CD8-positive, alpha-beta T cell (primary cell): ENCODE measurements at regions of chr14 and their contacts with region 1.

Region 1: DNA sequence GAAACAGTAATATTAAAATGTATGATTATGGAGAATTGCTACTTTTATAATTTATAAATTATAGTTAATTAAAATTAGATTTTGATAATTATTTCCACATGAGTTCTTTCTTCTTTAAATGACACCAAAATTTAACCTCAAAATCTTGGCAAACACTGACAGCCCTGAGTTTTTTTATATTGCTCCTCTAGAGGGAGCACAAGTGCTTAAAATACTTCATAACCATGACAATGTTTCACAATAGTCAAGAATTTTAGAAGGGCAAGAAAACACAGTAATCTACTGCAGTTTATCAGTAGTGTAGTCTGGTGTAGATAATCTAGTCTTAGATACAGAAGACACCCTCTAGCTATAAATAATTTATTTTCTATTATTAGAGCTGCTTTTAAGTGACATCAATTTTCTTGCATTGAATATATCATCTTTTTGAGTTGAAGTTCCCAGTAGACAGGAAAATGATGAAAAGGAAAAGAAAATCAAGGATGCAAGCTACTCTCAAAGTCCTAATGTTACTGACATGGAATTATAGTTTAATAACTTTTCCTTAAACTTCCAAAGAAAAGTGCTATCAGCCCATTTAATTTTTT is 14.3 kb upstream of the PTGER2 start:
- DNase-seq: peak in 2 of 9 experiments; percentile 60 to 74
- ATAC-seq: peak; percentile 49
- H3K4me3 ChIP-seq: no peak overlapping the region
- H3K4me3 Mint-ChIP-seq: no peak overlapping the region
- H3K27ac ChIP-seq: no peak overlapping the region
- H3K27ac Mint-ChIP-seq: no peak overlapping the region
- H3K4me1 ChIP-seq: no peaks in the 10 kb centered on the region
- H3K4me1 Mint-ChIP-seq: peaks cover 30% of the 10 kb centered on the region
- H3K27me3 ChIP-seq: no peaks in the 10 kb centered on the region
- H3K27me3 Mint-ChIP-seq: no peaks in the 10 kb centered on the region
- CTCF ChIP-seq: peak; percentile 96

Region 2: DNA sequence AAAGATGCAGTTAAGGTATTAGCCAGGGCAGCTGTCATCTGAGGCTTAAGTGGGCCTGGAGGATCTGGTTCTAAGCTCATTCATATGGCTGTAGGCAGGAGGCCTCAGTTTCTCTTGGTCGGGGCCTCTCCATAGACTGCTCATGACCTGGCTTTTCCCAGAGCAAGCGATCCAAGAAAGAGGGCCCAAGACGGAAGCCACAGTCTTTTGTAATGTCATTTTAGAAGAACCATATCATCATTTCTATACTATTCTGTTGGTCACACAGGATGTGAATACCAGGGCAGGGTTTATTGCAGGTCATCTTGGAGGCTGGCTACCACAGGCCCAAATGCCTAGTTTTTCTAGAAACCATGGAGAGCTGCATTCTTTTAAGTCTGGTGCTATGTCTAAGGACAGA is 391.7 kb before region 1 on chr14:
- CTCF ChIA-PET with region 1: no interaction called
- POLR2A ChIA-PET with region 1: no interaction called
- intact Hi-C with region 1: no loop called
- DNase-seq: no peak
- ATAC-seq: no peak
- H3K4me3 ChIP-seq: no peak overlapping the region
- H3K4me3 Mint-ChIP-seq: no peak overlapping the region
- H3K27ac ChIP-seq: peak overlapping the region in 1 of 2 experiments; percentile 47
- H3K27ac Mint-ChIP-seq: no peak overlapping the region
- H3K4me1 ChIP-seq: peaks cover 28% of the 10 kb centered on the region
- H3K4me1 Mint-ChIP-seq: peaks cover 68% of the 10 kb centered on the region
- H3K27me3 ChIP-seq: no peaks in the 10 kb centered on the region
- H3K27me3 Mint-ChIP-seq: no peaks in the 10 kb centered on the region
- CTCF ChIP-seq: no peak

Region 3: DNA sequence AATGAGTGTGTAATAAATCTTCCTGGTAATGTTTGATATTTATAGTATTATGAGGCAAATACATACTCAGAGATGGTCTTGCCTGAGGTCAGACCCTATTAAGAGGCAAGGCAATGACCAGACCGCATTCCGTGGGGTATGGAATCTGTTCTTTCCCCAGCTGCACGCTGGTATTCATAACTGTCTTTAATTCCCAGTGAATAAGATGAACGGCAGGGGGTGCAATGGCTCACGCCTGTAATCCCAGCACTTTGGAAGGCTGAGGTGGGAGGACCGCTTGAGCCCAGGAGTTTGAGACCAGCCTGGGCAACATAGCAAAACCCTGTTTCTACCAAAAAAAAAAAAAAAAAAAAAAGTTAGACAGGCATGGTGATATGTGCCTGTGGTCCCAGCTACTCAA is 351.0 kb after region 1 on chr14:
- CTCF ChIA-PET with region 1: no interaction called
- POLR2A ChIA-PET with region 1: interaction called, 3 read pairs
- intact Hi-C with region 1: loop called in 1 of 2 experiments (anchors 10 kb)
- DNase-seq: no peak
- ATAC-seq: no peak
- H3K4me3 ChIP-seq: no peak overlapping the region
- H3K4me3 Mint-ChIP-seq: no peak overlapping the region
- H3K27ac ChIP-seq: no peak overlapping the region
- H3K27ac Mint-ChIP-seq: no peak overlapping the region
- H3K4me1 ChIP-seq: no peaks in the 10 kb centered on the region
- H3K4me1 Mint-ChIP-seq: no peaks in the 10 kb centered on the region
- H3K27me3 ChIP-seq: no peaks in the 10 kb centered on the region
- H3K27me3 Mint-ChIP-seq: no peaks in the 10 kb centered on the region
- CTCF ChIP-seq: no peak

Region 4: GRCh38 chr14:52776816-52777215 is 477.0 kb after region 1 on chr14:
- CTCF ChIA-PET with region 1: interaction called, 3 read pairs
- POLR2A ChIA-PET with region 1: no interaction called
- intact Hi-C with region 1: loop called in 1 of 2 experiments (anchors 5 kb)
- DNase-seq: peak in 1 of 9 experiments; percentile 24
- ATAC-seq: no peak
- H3K4me3 ChIP-seq: no peak overlapping the region
- H3K4me3 Mint-ChIP-seq: no peak overlapping the region
- H3K27ac ChIP-seq: no peak overlapping the region
- H3K27ac Mint-ChIP-seq: peak overlapping the region; percentile 60
- H3K4me1 ChIP-seq: no peaks in the 10 kb centered on the region
- H3K4me1 Mint-ChIP-seq: no peaks in the 10 kb centered on the region
- H3K27me3 ChIP-seq: no peaks in the 10 kb centered on the region
- H3K27me3 Mint-ChIP-seq: no peaks in the 10 kb centered on the region
- CTCF ChIP-seq: no peak